ENCODE measurements at regions of chr3 and their contacts with region 1.

Region 1: GRCh38 chr3:158790901-158791589 is 10.8 kb upstream of the MFSD1 start:
- DNase-seq: peak; percentile 45 to 78 (median 52)
- ATAC-seq: peak; percentile 69
- H3K4me3 ChIP-seq: no peak overlapping the region
- H3K27ac ChIP-seq: peak overlapping the region; percentile 55; the same call in 2 of the 3 replicates
- H3K4me1 ChIP-seq: peaks cover 0 to 7% of the 10 kb centered on the region in 2 experiments; a peak in 2 of 5 replicates
- H3K27me3 ChIP-seq: no peaks in the 10 kb centered on the region
- CTCF ChIP-seq: peak; percentile 75 to 90 (median 77)
- EP300 ChIP-seq: peak; percentile 19; the same call in 1 of the 2 replicates
- POLR2A ChIP-seq: no peak
- RAD21 ChIP-seq: peak; percentile 82 to 86

Region 2: GRCh38 chr3:157606011-157606851 is 1184.8 kb before region 1 on chr3:
- CTCF ChIA-PET with region 1: interaction called, 3 read pairs
- POLR2A ChIA-PET with region 1: interaction called, 3 read pairs
- in situ Hi-C with region 1: loop called (anchors 25 kb)
- intact Hi-C with region 1: no loop called
- DNase-seq: peak; percentile 61 to 76 (median 69)
- ATAC-seq: peak; percentile 97
- H3K4me3 ChIP-seq: no peak overlapping the region
- H3K27ac ChIP-seq: no peak overlapping the region
- H3K4me1 ChIP-seq: no peaks in the 10 kb centered on the region
- H3K27me3 ChIP-seq: no peaks in the 10 kb centered on the region; a peak in 2 of 5 replicates
- CTCF ChIP-seq: peak; percentile 76 to 88 (median 81)
- EP300 ChIP-seq: no peak
- POLR2A ChIP-seq: no peak
- RAD21 ChIP-seq: peak; percentile 43 to 55

Region 3: GRCh38 chr3:157948605-157949383 is 842.3 kb before region 1 on chr3:
- CTCF ChIA-PET with region 1: no interaction called
- POLR2A ChIA-PET with region 1: no interaction called
- in situ Hi-C with region 1: no loop called
- intact Hi-C with region 1: no loop called
- DNase-seq: no peak
- ATAC-seq: no peak
- H3K4me3 ChIP-seq: no peak overlapping the region
- H3K27ac ChIP-seq: no peak overlapping the region
- H3K4me1 ChIP-seq: no peaks in the 10 kb centered on the region
- H3K27me3 ChIP-seq: no peaks in the 10 kb centered on the region
- CTCF ChIP-seq: no peak
- EP300 ChIP-seq: no peak
- POLR2A ChIP-seq: no peak
- RAD21 ChIP-seq: no peak

Region 4: DNA sequence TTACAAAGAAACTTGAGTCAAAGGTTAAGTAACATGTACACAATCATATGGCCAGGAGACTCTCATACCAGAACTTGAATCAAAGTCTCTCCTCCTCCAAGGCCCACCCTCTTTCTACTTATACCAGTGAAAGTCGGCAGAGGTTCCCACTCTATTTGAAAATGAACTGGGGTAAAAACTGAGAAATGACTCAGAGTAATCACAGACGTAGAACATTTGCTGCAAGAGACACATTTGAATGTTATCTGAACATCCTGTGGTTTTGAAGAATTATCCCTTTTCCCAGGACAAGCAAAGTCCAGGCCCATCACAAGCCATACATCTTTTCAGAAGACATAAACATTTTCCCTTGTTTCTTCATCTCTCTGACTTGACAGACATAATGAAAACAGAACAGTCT is 740.6 kb before region 1 on chr3:
- CTCF ChIA-PET with region 1: no interaction called
- POLR2A ChIA-PET with region 1: no interaction called
- in situ Hi-C with region 1: no loop called
- intact Hi-C with region 1: no loop called
- DNase-seq: no peak
- ATAC-seq: no peak
- H3K4me3 ChIP-seq: no peak overlapping the region
- H3K27ac ChIP-seq: no peak overlapping the region
- H3K4me1 ChIP-seq: no peaks in the 10 kb centered on the region
- H3K27me3 ChIP-seq: no peaks in the 10 kb centered on the region
- CTCF ChIP-seq: no peak
- EP300 ChIP-seq: no peak
- POLR2A ChIP-seq: no peak
- RAD21 ChIP-seq: no peak

Region 5: GRCh38 chr3:158458470-158458869 is 332.6 kb before region 1 on chr3:
- CTCF ChIA-PET with region 1: no interaction called
- POLR2A ChIA-PET with region 1: no interaction called
- in situ Hi-C with region 1: no loop called
- intact Hi-C with region 1: loop called (anchors 10 kb)
- DNase-seq: no peak
- ATAC-seq: no peak
- H3K4me3 ChIP-seq: no peak overlapping the region
- H3K27ac ChIP-seq: no peak overlapping the region
- H3K4me1 ChIP-seq: no peaks in the 10 kb centered on the region
- H3K27me3 ChIP-seq: no peaks in the 10 kb centered on the region
- CTCF ChIP-seq: no peak
- EP300 ChIP-seq: no peak
- POLR2A ChIP-seq: no peak
- RAD21 ChIP-seq: no peak

Region 6: DNA sequence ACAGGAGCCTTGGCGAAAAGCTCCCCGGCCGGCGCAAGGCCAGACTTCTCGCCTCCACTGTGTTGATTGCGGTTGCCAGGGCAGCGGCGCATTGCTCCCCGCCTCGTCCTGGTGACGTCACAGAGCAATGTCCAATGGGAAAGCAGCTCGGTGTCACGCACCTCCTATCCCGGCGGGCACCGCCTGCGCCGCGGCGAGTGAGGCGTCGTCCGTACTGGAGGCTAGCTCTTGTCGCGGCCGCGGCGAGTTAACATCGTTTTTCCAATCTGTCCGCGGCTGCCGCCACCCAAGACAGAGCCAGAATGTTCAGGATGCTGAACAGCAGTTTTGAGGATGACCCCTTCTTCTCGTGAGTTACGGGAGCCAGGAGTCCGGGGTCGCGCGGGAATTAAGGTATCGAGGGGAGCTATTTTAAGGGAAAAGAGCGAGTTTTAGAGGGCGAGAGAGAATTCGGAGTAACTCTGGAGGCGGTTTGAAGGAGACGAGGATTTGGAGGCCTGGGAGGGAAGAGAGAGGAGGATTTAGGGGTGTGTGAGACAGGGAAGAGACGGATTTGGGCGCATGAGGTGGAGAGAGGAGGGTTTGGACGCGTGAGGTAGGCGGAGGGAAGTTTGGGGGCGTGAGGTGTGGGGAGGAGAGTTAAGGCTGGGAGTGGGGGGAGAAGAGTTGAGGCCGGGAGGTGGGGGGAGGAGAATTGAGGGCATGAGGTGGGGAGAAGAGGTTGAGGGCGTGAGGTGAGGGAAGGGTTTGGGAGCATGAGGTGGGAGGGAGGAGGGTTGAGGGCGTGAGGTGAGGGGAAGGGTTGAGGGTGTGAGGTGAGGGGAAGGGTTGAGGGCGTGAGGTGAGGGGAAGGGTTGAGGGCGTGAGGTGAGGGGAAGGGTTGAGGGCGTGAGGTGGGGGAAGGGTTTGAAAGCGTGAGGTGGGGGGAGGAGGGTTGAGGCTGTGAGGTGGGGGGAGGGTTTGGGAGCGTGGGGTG is 219.8 kb before region 1 on chr3 and contains the start of gene MLF1:
- CTCF ChIA-PET with region 1: no interaction called
- POLR2A ChIA-PET with region 1: no interaction called
- in situ Hi-C with region 1: no loop called
- intact Hi-C with region 1: loop called (anchors 5 kb)
- DNase-seq: peak; percentile 97 to 99 (median 98)
- ATAC-seq: peak; percentile 100
- H3K4me3 ChIP-seq: peak within 1 kb of the TSS; percentile 63
- H3K27ac ChIP-seq: peak within 1 kb of the TSS; percentile 83
- H3K4me1 ChIP-seq: peaks cover 8 to 25% of the 10 kb centered on the region in 2 experiments; a peak in 4 of 5 replicates
- H3K27me3 ChIP-seq: no peaks in the 10 kb centered on the region
- CTCF ChIP-seq: no peak
- EP300 ChIP-seq: no peak
- POLR2A ChIP-seq: peak; percentile 76
- RAD21 ChIP-seq: no peak
- polyA plus RNA-seq, gene MLF1: 63.5 to 71.0 TPM

Region 7: GRCh38 chr3:158727206-158728060 is 63.6 kb before region 1 on chr3:
- CTCF ChIA-PET with region 1: interaction called, 81 read pairs
- POLR2A ChIA-PET with region 1: interaction called, 3 read pairs
- in situ Hi-C with region 1: loop called (anchors 5 kb)
- intact Hi-C with region 1: loop called (anchors 1 kb)
- DNase-seq: peak; percentile 65 to 81 (median 73)
- ATAC-seq: peak; percentile 87
- H3K4me3 ChIP-seq: no peak overlapping the region
- H3K27ac ChIP-seq: peak overlapping the region; percentile 3; the same call in 1 of the 3 replicates
- H3K4me1 ChIP-seq: peaks cover 3 to 10% of the 10 kb centered on the region in 2 experiments; a peak in 3 of 5 replicates
- H3K27me3 ChIP-seq: no peaks in the 10 kb centered on the region
- CTCF ChIP-seq: peak; percentile 77 to 89 (median 83)
- EP300 ChIP-seq: no peak
- POLR2A ChIP-seq: no peak
- RAD21 ChIP-seq: peak; percentile 92 to 95

Region 8: GRCh38 chr3:159165961-159166360 is 374.9 kb after region 1 on chr3:
- CTCF ChIA-PET with region 1: no interaction called
- POLR2A ChIA-PET with region 1: no interaction called
- in situ Hi-C with region 1: no loop called
- intact Hi-C with region 1: no loop called
- DNase-seq: no peak
- ATAC-seq: no peak
- H3K4me3 ChIP-seq: no peak overlapping the region
- H3K27ac ChIP-seq: no peak overlapping the region
- H3K4me1 ChIP-seq: no peaks in the 10 kb centered on the region
- H3K27me3 ChIP-seq: no peaks in the 10 kb centered on the region
- CTCF ChIP-seq: no peak
- EP300 ChIP-seq: no peak
- POLR2A ChIP-seq: no peak
- RAD21 ChIP-seq: no peak